ENCODE measurements at regions of chr2 and their contacts with region 1.

Region 1: DNA sequence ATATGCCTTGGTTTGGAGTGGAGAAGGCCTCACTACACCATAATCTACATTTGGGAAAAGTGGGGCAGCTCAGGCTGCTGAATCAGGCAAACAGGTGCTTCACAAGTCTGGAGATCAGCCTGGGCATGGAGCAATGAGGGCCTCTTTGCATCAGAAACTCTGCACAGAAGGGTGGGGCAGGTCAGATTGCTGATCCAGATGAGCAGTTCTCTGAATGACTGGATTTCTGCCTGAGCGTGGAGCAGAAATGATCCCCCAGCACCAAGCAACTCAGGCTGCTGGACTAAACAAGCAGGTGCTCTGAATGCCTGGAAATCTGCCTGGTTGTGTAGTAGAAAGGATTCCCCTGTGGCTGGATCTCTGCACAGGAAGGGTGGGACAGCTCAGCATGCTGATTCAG is 605.3 kb upstream of the ZNF804A start:
- DNase-seq: peak; percentile 59
- ATAC-seq: peak; percentile 35
- H3K4me3 ChIP-seq: no peak overlapping the region
- H3K27ac ChIP-seq: peak overlapping the region; percentile 68
- H3K4me1 ChIP-seq: peaks cover 68% of the 10 kb centered on the region
- H3K27me3 ChIP-seq: no peaks in the 10 kb centered on the region
- CTCF ChIP-seq: no peak

Region 2: GRCh38 chr2:183809287-183809803 is 183.7 kb before region 1 on chr2:
- CTCF ChIA-PET with region 1: no interaction called
- POLR2A ChIA-PET with region 1: no interaction called
- intact Hi-C with region 1: loop called (anchors 5 kb)
- DNase-seq: peak; percentile 70
- ATAC-seq: peak; percentile 19; the same call in 1 of the 2 replicates
- H3K4me3 ChIP-seq: no peak overlapping the region
- H3K27ac ChIP-seq: peak overlapping the region; percentile 46
- H3K4me1 ChIP-seq: peaks cover 48% of the 10 kb centered on the region
- H3K27me3 ChIP-seq: no peaks in the 10 kb centered on the region
- CTCF ChIP-seq: no peak

Region 3: GRCh38 chr2:184026961-184027360 is 33.9 kb after region 1 on chr2:
- CTCF ChIA-PET with region 1: no interaction called
- POLR2A ChIA-PET with region 1: no interaction called
- intact Hi-C with region 1: loop called (anchors 2 kb)
- DNase-seq: no peak
- ATAC-seq: no peak
- H3K4me3 ChIP-seq: no peak overlapping the region
- H3K27ac ChIP-seq: no peak overlapping the region
- H3K4me1 ChIP-seq: peaks cover 14% of the 10 kb centered on the region
- H3K27me3 ChIP-seq: no peaks in the 10 kb centered on the region
- CTCF ChIP-seq: no peak

Region 4: GRCh38 chr2:184118004-184118403 is 125.0 kb after region 1 on chr2:
- CTCF ChIA-PET with region 1: no interaction called
- POLR2A ChIA-PET with region 1: no interaction called
- intact Hi-C with region 1: loop called (anchors 5 kb)
- DNase-seq: peak; percentile 11
- ATAC-seq: peak; percentile 64
- H3K4me3 ChIP-seq: peak overlapping the region; percentile 18; the same call in 1 of the 2 replicates
- H3K27ac ChIP-seq: no peak overlapping the region
- H3K4me1 ChIP-seq: peaks cover 8% of the 10 kb centered on the region
- H3K27me3 ChIP-seq: no peaks in the 10 kb centered on the region
- CTCF ChIP-seq: no peak

Measured in PC-3 (cell line).